Ascending aorta (tissue), 2 donors: ENCODE measurements at regions of chr11 and their contacts with region 1.

Region 1: GRCh38 chr11:106344966-106345365 is 267.5 kb downstream of the AASDHPPT start:
- DNase-seq: no peak
- H3K4me3 ChIP-seq: no peak overlapping the region
- H3K27ac ChIP-seq: no peak overlapping the region
- H3K4me1 ChIP-seq: no peaks in the 10 kb centered on the region
- H3K27me3 ChIP-seq: no peaks in the 10 kb centered on the region
- CTCF ChIP-seq: no peak

Region 2: DNA sequence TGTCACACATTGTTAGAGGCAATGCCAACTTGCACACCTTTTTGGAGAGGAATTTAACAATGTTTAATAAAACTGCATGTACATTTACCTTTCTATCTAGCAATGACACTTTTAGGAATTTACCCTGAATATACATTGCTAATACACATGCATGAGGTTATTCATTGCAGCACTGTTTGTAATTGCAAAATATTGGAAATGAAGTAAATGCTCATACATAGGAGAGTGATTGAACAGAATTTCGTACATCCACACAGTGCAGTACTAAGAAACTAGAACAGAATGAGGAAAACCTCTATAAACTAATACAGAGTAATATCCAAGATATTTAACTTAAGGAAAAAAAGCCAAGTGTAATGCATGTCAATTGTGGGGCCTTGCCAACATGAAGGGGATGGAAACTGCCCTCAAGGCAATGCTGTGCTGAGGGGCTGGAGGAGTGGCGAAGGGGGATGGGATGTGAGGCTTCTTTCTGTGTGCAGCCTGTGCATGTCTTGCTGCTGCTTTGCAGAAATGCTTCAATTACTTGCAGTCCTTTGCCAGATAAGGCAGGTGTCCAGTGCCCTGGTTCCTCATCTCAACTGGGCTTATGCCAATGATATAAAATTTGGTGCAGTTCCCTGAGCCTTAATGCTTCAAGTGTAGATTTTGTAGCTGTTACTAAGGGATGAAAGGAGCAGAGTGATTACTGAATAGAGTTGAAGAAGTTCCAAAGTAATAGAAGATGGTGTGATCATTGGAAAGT is 639.0 kb before region 1 on chr11:
- intact Hi-C with region 1: loop called (anchors 5 kb)
- DNase-seq: no peak
- H3K4me3 ChIP-seq: no peak overlapping the region
- H3K27ac ChIP-seq: no peak overlapping the region
- H3K4me1 ChIP-seq: no peaks in the 10 kb centered on the region
- H3K27me3 ChIP-seq: no peaks in the 10 kb centered on the region
- CTCF ChIP-seq: no peak

Region 3: DNA sequence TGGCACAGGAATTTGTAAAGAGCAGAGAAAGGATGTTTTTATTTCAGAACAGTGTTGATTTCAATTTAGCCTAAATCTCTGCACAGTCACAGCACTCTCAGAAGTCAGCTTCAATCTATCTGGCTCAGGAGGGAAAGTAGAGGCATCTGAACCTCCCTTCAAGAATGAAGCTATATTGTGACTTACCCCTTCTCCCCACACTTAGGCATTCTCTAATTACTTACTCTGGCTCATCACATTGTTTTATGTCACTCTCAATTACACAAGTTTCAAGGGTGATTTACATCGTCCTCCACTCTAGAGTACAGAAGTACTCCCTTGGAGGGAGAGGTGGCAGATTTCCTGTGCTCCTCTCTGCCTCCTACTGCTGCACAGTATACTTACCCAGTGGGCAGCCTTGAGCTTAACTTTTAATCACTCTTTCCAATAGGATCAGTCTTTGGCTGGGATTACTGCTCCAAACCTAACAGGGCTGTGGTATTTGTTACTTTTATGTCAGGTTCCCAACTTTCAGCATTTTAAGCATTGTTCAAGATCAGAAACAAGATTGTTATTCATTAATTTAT is 56.1 kb before region 1 on chr11:
- intact Hi-C with region 1: no loop called
- DNase-seq: no peak
- H3K4me3 ChIP-seq: no peak overlapping the region
- H3K27ac ChIP-seq: no peak overlapping the region
- H3K4me1 ChIP-seq: no peaks in the 10 kb centered on the region
- H3K27me3 ChIP-seq: no peaks in the 10 kb centered on the region
- CTCF ChIP-seq: no peak